ENCODE measurements at regions of chr13 and their contacts with region 1.

Region 1: GRCh38 chr13:52070929-52071523 is 46.5 kb downstream of the UTP14C start:
- DNase-seq: peak; percentile 73
- H3K4me3 Mint-ChIP-seq: no peak overlapping the region
- H3K27ac Mint-ChIP-seq: no peak overlapping the region
- H3K4me1 Mint-ChIP-seq: peaks cover 11% of the 10 kb centered on the region
- H3K27me3 Mint-ChIP-seq: peaks cover 16% of the 10 kb centered on the region

Region 2: DNA sequence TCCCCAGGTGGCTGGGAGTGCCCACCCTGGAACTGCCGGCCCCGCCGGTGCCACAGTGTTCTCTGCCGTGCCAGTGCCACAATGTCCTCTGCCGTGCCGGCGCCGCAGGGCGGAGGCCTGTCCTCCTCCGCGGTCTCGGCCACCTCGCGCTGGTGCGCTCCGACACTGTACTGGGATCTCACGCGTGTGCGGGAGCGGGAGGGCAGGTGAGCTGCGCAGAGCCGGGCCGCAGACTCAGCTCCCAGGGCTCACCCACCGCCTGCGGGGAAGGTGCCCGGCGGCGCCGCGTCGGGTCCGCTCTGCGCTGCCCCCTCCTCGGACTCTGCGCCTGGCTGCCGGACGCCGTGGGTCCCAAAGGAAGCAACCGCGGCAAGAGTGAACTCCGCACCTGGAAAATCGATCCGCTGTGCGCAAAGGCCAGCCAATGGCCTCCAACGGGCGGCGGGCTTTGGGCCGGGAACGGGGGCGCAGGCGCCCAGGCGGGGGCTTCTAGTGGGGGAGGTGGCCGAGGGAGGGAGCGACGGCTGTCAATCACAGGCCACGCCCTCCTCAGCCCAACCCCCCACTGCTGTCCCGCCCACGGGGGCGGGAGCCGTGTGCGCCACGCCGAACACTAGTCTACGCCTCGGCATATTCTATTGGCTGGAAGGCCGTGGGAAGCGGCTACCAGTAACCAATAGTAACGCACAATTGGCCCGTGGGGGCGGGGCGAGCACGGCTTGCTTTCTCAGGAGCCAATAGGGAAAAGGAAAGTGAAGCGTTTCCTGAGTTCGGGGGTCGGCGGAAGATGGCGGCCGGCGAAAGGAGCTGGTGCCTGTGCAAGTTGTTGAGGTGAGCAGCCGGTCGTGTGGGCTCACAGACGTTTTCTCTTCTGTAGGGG is 59.2 kb before region 1 on chr13 and contains the start of gene ALG11:
- CTCF ChIA-PET with region 1: no interaction called
- intact Hi-C with region 1: no loop called
- DNase-seq: peak; percentile 100
- H3K4me3 Mint-ChIP-seq: peak within 1 kb of the TSS; percentile 98
- H3K27ac Mint-ChIP-seq: peak within 1 kb of the TSS; percentile 85
- H3K4me1 Mint-ChIP-seq: peaks cover 14% of the 10 kb centered on the region
- H3K27me3 Mint-ChIP-seq: peaks cover 10% of the 10 kb centered on the region
- total RNA-seq, gene ALG11: 12.6 to 15.6 TPM

Region 3: DNA sequence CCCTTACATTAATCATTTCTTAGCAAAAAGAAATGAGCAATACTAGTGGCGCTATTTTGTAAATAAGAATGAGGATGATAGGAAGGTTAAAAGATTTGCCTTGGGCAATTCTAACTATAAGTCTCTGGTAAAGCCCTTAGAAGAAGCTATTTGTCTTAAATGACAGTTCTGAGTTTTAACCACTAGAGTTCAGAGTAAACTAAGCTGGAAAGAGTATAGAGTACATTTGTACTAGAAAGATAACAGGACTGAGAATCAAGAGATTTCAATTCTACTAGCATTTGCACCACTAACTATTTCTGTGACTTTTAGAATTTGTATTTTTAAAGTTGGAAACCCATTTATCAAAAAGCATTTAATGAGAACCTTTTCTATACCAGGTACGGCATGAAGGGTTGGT is 1707.9 kb after region 1 on chr13:
- CTCF ChIA-PET with region 1: no interaction called
- intact Hi-C with region 1: no loop called
- DNase-seq: no peak
- H3K4me3 Mint-ChIP-seq: no peak overlapping the region
- H3K27ac Mint-ChIP-seq: no peak overlapping the region
- H3K4me1 Mint-ChIP-seq: peaks cover 3% of the 10 kb centered on the region
- H3K27me3 Mint-ChIP-seq: peaks cover under 1% of the 10 kb centered on the region

Region 4: DNA sequence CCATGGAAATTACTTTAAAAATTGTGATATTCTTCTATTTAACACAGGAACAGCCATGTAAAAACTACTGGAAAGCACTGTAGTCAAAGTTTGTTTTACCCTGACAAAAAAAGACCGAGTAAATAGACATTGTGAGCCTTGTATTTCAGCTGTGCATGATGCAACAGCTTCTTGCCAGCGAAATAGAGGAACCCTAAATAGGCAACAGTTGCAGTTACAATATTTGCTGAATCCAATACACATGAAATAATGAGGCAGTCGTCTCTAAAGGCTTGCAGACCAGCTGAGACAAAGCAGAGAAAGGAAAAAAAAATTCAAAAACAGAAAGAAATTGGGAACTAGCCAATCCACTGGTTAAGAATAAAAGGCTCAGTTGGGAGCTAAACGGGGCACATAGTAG is 1958.7 kb after region 1 on chr13:
- CTCF ChIA-PET with region 1: no interaction called
- intact Hi-C with region 1: loop called (anchors 10 kb)
- DNase-seq: no peak
- H3K4me3 Mint-ChIP-seq: no peak overlapping the region
- H3K27ac Mint-ChIP-seq: no peak overlapping the region
- H3K4me1 Mint-ChIP-seq: no peaks in the 10 kb centered on the region
- H3K27me3 Mint-ChIP-seq: no peaks in the 10 kb centered on the region